ENCODE measurements at regions of chr4 and their contacts with region 1.

Region 1: GRCh38 chr4:71184195-71184781 is 154.5 kb upstream of the SLC4A4 start:
- DNase-seq: peak; percentile 36 to 55 (median 47)
- H3K4me3 ChIP-seq: no peak overlapping the region
- H3K4me3 Mint-ChIP-seq: peak overlapping the region in 1 of 8 donors; percentile 53
- H3K27ac ChIP-seq: no peak overlapping the region
- H3K27ac Mint-ChIP-seq: peak overlapping the region in 2 of 7 donors; percentile 2 to 49
- H3K4me1 ChIP-seq: peaks cover 21% of the 10 kb centered on the region
- H3K4me1 Mint-ChIP-seq: peaks cover 16 to 34% (median 23%) of the 10 kb centered on the region in 4 donors
- H3K27me3 ChIP-seq: peaks cover 13% of the 10 kb centered on the region
- H3K27me3 Mint-ChIP-seq: peaks cover 12 to 26% of the 10 kb centered on the region in 2 donors

Region 2: GRCh38 chr4:70984589-70984988 is 199.7 kb before region 1 on chr4:
- CTCF ChIA-PET with region 1: interaction called, 3 read pairs
- POLR2A ChIA-PET with region 1: no interaction called
- intact Hi-C with region 1: loop called (anchors 2 kb)
- DNase-seq: peak in 2 of 5 donors; percentile 22 to 30
- H3K4me3 ChIP-seq: no peak overlapping the region
- H3K4me3 Mint-ChIP-seq: no peak overlapping the region
- H3K27ac ChIP-seq: no peak overlapping the region
- H3K27ac Mint-ChIP-seq: no peak overlapping the region
- H3K4me1 ChIP-seq: no peaks in the 10 kb centered on the region
- H3K4me1 Mint-ChIP-seq: no peaks in the 10 kb centered on the region
- H3K27me3 ChIP-seq: no peaks in the 10 kb centered on the region
- H3K27me3 Mint-ChIP-seq: no peaks in the 10 kb centered on the region

Region 3: DNA sequence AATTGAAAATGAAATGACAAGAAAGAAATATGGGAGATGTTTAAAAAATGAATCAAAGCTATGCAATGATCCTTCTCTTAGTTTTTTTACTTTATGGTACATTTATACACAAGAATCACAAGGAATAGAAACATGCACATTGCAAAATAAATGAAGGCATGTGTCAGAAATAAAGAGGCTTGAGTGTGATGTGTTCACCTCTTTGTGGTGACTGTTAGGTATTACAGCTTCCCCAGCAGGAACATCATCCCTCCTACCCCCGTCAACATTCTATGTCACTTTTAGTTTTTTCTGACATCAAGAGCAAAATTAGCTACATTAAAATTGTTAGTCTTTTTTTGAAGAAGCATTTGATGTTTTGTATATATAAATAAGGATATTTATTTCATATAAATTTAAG is 369.3 kb after region 1 on chr4:
- CTCF ChIA-PET with region 1: no interaction called
- POLR2A ChIA-PET with region 1: no interaction called
- intact Hi-C with region 1: loop called (anchors 10 kb)
- DNase-seq: no peak
- H3K4me3 ChIP-seq: no peak overlapping the region
- H3K4me3 Mint-ChIP-seq: no peak overlapping the region
- H3K27ac ChIP-seq: no peak overlapping the region
- H3K27ac Mint-ChIP-seq: no peak overlapping the region
- H3K4me1 ChIP-seq: no peaks in the 10 kb centered on the region
- H3K4me1 Mint-ChIP-seq: no peaks in the 10 kb centered on the region
- H3K27me3 ChIP-seq: no peaks in the 10 kb centered on the region
- H3K27me3 Mint-ChIP-seq: no peaks in the 10 kb centered on the region

Measured in CD4-positive, alpha-beta memory T cell (primary cell).